PC-9 (cell line): ENCODE measurements at regions of chr1 and their contacts with region 1.

Region 1: DNA sequence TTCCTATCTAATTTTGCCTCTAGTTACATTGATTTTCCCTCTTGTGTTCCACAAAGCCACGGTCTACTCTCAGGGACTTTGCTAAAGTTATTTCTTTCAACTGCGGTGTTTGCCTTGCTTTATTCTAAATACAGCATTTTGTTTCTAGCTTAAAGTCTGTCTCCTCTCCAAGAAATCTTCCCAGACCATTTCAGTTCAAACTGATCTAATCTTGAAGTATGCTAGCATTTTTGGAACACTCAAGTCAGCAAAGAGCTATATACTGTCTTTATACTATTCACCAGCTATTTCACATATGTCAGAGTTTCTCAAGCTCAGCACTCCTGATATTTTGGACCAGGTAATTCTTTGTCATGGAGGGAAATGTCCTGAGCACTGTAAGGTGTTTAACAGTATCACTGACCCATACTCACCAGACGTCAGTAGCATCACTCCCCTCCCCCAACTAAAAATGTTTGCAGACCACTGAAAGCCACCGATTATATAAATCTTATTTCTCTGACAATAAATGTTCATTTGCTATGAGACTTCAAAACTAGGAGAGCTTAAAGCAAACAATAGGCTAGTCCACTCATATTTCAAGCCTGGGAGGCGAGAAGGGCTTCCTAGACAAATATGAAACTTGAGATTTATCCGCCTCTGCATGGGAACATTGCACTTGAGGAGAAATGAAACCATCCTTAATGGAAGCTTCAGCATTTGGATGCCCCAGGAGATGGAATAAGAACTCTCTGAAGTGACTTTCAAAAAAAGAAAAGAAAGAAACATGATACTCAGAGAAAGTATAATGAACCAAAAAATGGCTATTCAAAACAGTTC is 81.1 kb downstream of the KIAA0319L start:
- DNase-seq: no peak
- H3K4me3 ChIP-seq: no peak overlapping the region
- H3K27ac ChIP-seq: no peak overlapping the region
- H3K4me1 ChIP-seq: no peaks in the 10 kb centered on the region
- H3K27me3 ChIP-seq: no peaks in the 10 kb centered on the region
- CTCF ChIP-seq: no peak

Region 2: GRCh38 chr1:35340519-35340918 is 135.5 kb before region 1 on chr1:
- CTCF ChIA-PET with region 1: no interaction called
- POLR2A ChIA-PET with region 1: no interaction called
- intact Hi-C with region 1: no loop called
- DNase-seq: no peak
- H3K4me3 ChIP-seq: no peak overlapping the region
- H3K27ac ChIP-seq: no peak overlapping the region
- H3K4me1 ChIP-seq: no peaks in the 10 kb centered on the region
- H3K27me3 ChIP-seq: no peaks in the 10 kb centered on the region
- CTCF ChIP-seq: no peak

Region 3: DNA sequence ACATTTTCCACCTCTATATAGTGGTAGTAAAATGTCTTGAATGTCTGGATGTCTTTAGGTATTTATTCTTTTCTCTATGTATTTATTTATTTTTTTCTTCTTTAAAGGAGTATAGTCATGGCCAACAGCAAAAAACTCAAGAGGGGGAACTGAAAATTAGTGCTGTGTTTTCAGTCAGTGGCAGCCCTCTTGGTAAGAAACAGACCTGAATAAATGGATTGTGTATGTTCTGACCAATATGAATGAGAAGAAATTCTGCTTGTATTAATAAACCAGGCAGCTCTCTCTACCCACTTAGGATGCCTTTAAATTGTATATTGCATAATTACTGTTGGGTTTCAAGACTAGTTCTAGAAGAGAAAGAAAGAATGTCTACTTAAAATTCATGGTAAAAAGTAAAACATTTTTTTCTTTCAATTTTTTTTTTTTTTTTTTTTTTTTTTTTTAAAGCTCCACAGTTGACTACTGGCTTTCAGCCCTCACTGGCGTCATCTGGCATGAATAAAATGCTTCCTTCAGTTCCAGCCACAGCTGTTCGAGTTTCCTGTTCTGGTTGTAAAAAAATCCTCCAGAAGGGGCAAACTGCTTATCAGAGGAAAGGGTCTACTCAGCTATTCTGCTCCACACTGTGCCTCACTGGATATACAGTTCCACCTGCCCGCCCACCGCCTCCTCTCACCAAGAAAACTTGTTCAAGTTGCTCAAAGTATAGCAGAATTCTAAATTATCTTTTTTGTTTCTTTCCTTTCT is 106.0 kb before region 1 on chr1:
- CTCF ChIA-PET with region 1: interaction called, 19 read pairs
- POLR2A ChIA-PET with region 1: no interaction called
- intact Hi-C with region 1: no loop called
- DNase-seq: no peak
- H3K4me3 ChIP-seq: no peak overlapping the region
- H3K27ac ChIP-seq: no peak overlapping the region
- H3K4me1 ChIP-seq: no peaks in the 10 kb centered on the region
- H3K27me3 ChIP-seq: no peaks in the 10 kb centered on the region
- CTCF ChIP-seq: no peak

Region 4: DNA sequence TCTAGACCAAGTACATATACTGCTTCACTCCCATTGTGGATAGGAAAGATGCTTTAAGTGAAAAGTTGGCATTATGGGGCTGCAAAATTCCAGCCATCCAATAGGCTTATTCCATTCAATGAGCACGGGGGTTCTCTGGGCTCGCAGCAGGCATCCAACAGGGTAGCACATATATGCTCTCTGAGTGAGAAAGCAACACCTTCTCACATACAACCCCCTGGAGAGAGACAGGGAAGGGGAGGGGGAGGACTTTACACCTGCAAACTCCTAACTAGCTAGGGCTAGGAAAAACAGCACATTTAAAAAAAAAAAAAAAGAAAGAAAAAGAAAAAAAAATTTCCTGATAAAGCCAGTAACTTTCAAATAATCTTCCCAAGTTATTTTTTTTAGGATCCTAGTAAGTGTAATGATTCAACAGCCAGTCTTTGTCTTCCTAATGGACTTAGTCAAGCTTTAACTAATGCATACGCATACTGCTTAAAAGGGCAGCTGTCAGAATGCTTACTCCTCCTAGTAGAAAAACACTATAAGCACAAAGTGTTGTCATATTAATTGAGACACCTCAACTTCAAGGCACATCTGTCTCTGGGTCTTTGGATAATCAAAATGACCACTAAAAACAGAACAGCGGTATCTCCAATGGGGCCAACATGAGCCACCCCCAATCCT is 146.6 kb after region 1 on chr1:
- CTCF ChIA-PET with region 1: no interaction called
- POLR2A ChIA-PET with region 1: interaction called, 10 read pairs
- intact Hi-C with region 1: no loop called
- DNase-seq: no peak
- H3K4me3 ChIP-seq: no peak overlapping the region
- H3K27ac ChIP-seq: no peak overlapping the region
- H3K4me1 ChIP-seq: no peaks in the 10 kb centered on the region
- H3K27me3 ChIP-seq: no peaks in the 10 kb centered on the region
- CTCF ChIP-seq: no peak